ENCODE measurements at regions of chr11 and their contacts with region 1.

Region 1: DNA sequence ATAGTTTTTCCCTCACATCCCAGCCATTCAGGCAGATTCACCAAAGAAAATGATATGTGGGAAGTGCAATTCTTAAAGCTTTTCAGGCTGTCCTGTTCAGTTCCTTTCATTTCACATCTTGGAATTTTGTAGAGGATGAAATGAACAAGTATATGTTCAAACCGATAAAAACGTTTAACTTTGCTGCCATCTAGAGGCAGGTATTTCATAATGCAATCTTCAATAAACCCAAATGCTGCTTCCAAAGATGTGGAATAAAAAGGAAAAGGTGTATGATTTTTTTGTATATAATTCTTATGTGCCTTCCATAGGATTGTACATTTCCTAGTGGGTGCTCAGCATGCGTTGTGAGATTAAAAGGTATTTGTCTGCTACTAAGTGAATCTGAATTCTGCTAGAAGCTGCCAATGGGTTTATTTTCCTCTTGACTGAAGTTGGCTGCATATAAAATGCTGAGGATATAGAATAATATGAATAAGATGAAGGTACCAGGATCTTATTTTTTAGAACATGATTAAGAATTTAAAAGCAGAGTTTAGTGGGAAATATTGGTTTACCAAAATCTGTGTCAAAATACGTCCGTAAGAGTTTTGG is 199.3 kb downstream of the PGR start:
- DNase-seq: peak in 1 of 2 experiments; percentile 66
- H3K4me3 ChIP-seq: no peak overlapping the region
- H3K4me3 Mint-ChIP-seq: no peak overlapping the region
- H3K27ac Mint-ChIP-seq: no peak overlapping the region
- H3K4me1 ChIP-seq: peaks cover 14% of the 10 kb centered on the region; the same call in 1 of the 2 replicates
- H3K4me1 Mint-ChIP-seq: peaks cover 7% of the 10 kb centered on the region
- H3K27me3 ChIP-seq: no peaks in the 10 kb centered on the region
- H3K27me3 Mint-ChIP-seq: no peaks in the 10 kb centered on the region
- CTCF ChIP-seq: peak; percentile 73 to 75

Region 2: GRCh38 chr11:99814738-99815137 is 1115.5 kb before region 1 on chr11:
- CTCF ChIA-PET with region 1: no interaction called
- POLR2A ChIA-PET with region 1: no interaction called
- intact Hi-C with region 1: loop called (anchors 10 kb)
- DNase-seq: peak in 1 of 2 experiments; percentile 16
- H3K4me3 ChIP-seq: no peak overlapping the region
- H3K4me3 Mint-ChIP-seq: no peak overlapping the region
- H3K27ac Mint-ChIP-seq: no peak overlapping the region
- H3K4me1 ChIP-seq: no peaks in the 10 kb centered on the region
- H3K4me1 Mint-ChIP-seq: no peaks in the 10 kb centered on the region
- H3K27me3 ChIP-seq: no peaks in the 10 kb centered on the region
- H3K27me3 Mint-ChIP-seq: no peaks in the 10 kb centered on the region
- CTCF ChIP-seq: peak; percentile 36 to 40

Region 3: DNA sequence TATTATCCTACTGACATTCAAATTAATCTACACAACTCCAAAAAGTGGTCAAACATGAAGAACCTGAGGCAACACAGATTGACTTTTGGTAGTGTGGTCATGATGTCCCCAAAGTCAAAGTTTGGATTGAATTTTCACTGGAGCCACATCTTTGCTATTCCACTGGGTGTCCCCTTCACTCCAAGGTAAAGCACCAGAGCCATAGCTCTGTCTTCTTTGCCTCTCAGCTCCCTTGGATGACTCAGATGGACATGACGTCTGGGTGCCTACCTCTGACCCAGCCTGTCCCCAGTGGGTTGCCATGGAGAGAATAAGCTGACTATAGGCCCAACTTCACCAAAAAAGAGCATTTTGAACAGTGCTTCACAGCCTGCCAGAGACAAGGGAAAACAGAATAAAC is 300.6 kb before region 1 on chr11:
- CTCF ChIA-PET with region 1: interaction called, 3 read pairs
- POLR2A ChIA-PET with region 1: no interaction called
- intact Hi-C with region 1: loop called (anchors 1 kb)
- DNase-seq: peak in 1 of 2 experiments; percentile 22
- H3K4me3 ChIP-seq: no peak overlapping the region
- H3K4me3 Mint-ChIP-seq: no peak overlapping the region
- H3K27ac Mint-ChIP-seq: no peak overlapping the region
- H3K4me1 ChIP-seq: no peaks in the 10 kb centered on the region
- H3K4me1 Mint-ChIP-seq: no peaks in the 10 kb centered on the region
- H3K27me3 ChIP-seq: no peaks in the 10 kb centered on the region
- H3K27me3 Mint-ChIP-seq: peaks cover 2% of the 10 kb centered on the region
- CTCF ChIP-seq: peak in 1 of 2 experiments; percentile 25

Region 4: GRCh38 chr11:100671483-100671882 is 258.8 kb before region 1 on chr11:
- CTCF ChIA-PET with region 1: no interaction called
- POLR2A ChIA-PET with region 1: no interaction called
- intact Hi-C with region 1: no loop called
- DNase-seq: no peak
- H3K4me3 ChIP-seq: no peak overlapping the region
- H3K4me3 Mint-ChIP-seq: no peak overlapping the region
- H3K27ac Mint-ChIP-seq: no peak overlapping the region
- H3K4me1 ChIP-seq: no peaks in the 10 kb centered on the region
- H3K4me1 Mint-ChIP-seq: no peaks in the 10 kb centered on the region
- H3K27me3 ChIP-seq: no peaks in the 10 kb centered on the region
- H3K27me3 Mint-ChIP-seq: peaks cover 2% of the 10 kb centered on the region
- CTCF ChIP-seq: no peak

Region 5: GRCh38 chr11:100687630-100688395 is 242.5 kb before region 1 on chr11:
- CTCF ChIA-PET with region 1: no interaction called
- POLR2A ChIA-PET with region 1: no interaction called
- intact Hi-C with region 1: loop called (anchors 1 kb)
- DNase-seq: peak; percentile 78
- H3K4me3 ChIP-seq: peak overlapping the region; percentile 85
- H3K4me3 Mint-ChIP-seq: peak overlapping the region; percentile 100
- H3K27ac Mint-ChIP-seq: peak overlapping the region; percentile 89
- H3K4me1 ChIP-seq: peaks cover 9% of the 10 kb centered on the region
- H3K4me1 Mint-ChIP-seq: peaks cover 21% of the 10 kb centered on the region
- H3K27me3 ChIP-seq: no peaks in the 10 kb centered on the region
- H3K27me3 Mint-ChIP-seq: no peaks in the 10 kb centered on the region
- CTCF ChIP-seq: peak; percentile 92

Region 6: DNA sequence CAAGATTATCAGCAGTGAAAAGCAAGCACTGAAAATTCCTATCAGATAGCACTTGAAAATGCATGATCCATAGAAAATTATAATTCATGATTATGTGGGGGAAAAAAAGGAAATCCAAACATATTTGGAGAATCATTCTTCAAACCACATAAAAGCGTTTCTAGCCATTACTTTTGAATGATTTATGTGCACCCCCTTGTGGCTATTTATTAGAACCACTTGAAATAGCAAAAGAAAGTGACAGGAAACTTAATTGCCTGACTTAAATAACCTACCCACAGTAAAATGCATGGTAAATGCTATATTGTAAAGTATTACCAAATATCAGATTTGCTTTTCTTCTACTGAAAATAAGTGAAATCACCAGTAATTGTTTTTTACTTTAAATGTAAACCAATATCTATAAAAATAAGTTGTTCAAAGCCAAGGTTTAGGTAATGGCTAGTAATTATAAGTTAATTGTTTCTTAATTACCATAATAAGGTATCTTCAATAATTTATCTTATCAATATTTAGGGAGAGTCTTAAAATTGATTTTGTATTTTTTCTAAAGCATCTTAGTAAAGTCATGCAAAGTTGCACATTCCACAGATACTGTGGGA is 74.7 kb before region 1 on chr11:
- CTCF ChIA-PET with region 1: no interaction called
- POLR2A ChIA-PET with region 1: no interaction called
- intact Hi-C with region 1: loop called (anchors 1 kb)
- DNase-seq: peak in 1 of 2 experiments; percentile 65
- H3K4me3 ChIP-seq: no peak overlapping the region
- H3K4me3 Mint-ChIP-seq: no peak overlapping the region
- H3K27ac Mint-ChIP-seq: no peak overlapping the region
- H3K4me1 ChIP-seq: peaks cover 32% of the 10 kb centered on the region
- H3K4me1 Mint-ChIP-seq: peaks cover 27% of the 10 kb centered on the region
- H3K27me3 ChIP-seq: no peaks in the 10 kb centered on the region
- H3K27me3 Mint-ChIP-seq: no peaks in the 10 kb centered on the region
- CTCF ChIP-seq: peak; percentile 64 to 81

Region 7: DNA sequence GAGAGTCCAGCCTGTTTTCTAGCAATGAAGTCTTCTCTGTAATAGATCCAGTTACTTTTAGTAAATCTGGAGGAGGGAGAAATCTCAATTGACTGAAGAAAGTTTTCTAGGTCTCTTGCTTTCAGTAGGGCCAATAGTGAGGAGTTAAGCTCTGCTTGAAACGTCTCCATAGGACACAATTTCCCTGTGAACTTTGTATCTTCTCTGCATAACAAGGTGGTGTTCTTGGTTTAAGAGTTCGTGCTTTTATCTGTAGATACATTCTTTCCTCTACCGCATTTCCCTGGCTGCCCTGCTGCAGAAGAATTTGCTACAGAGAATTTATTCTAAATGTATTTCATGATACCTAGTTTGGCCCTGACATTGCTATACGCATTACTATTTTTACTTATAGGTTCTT is 60.1 kb before region 1 on chr11:
- CTCF ChIA-PET with region 1: no interaction called
- POLR2A ChIA-PET with region 1: no interaction called
- intact Hi-C with region 1: loop called (anchors 2 kb)
- DNase-seq: no peak
- H3K4me3 ChIP-seq: no peak overlapping the region
- H3K4me3 Mint-ChIP-seq: no peak overlapping the region
- H3K27ac Mint-ChIP-seq: no peak overlapping the region
- H3K4me1 ChIP-seq: peaks cover 12% of the 10 kb centered on the region
- H3K4me1 Mint-ChIP-seq: no peaks in the 10 kb centered on the region
- H3K27me3 ChIP-seq: no peaks in the 10 kb centered on the region
- H3K27me3 Mint-ChIP-seq: no peaks in the 10 kb centered on the region
- CTCF ChIP-seq: no peak